ENCODE measurements at regions of chr1 and their contacts with region 1.

Region 1: DNA sequence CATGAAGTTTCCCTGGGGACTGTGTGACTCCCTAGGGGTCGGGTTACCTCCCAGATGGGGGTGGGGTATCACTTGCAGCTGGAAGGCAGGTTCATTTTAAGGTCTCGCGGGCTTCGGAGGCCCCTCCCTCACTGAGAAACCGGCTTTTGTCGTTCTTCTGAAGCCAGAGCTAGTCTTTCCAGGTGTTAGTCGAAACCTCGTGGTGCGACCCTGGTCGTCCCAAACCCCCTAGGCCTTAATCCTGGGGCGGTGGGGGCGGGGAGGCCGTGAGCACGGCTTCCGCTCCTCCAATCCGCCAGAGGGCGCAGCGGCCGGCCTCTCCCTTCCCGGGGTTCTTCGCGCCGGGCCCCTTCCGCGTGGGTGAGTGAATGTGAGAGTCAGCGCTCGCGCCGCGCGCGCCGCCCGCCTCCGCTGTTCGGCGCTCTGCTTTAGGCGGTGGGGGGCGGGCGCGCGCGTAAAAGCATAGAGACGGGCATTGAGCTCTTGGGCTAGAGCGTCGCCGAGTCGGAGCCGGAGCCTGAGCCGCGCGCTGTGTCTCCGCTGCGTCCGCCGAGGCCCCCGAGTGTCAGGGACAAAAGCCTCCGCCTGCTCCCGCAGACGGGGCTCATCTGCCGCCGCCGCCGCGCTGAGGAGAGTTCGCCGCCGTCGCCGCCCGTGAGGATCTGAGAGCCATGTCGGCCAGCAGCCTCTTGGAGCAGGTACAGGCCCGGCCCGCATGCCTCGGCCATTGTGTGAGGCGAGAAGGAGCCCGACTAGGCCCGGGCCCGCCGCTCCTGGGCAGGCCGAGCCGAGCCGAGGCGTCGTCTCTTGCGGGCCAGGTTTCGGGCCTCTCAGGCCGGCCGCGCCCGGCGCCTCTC is at the start of gene YTHDF2:
- DNase-seq: peak; percentile 99
- ATAC-seq: peak; percentile 91
- H3K4me3 Mint-ChIP-seq: peak within 1 kb of the TSS; percentile 98
- H3K27ac Mint-ChIP-seq: peak within 1 kb of the TSS; percentile 92
- H3K4me1 Mint-ChIP-seq: peaks cover 35% of the 10 kb centered on the region
- H3K27me3 Mint-ChIP-seq: no peaks in the 10 kb centered on the region
- CTCF ChIP-seq: peak; percentile 97
- total RNA-seq, gene YTHDF2: 72.2 to 82.1 TPM

Region 2: GRCh38 chr1:28642847-28643635 is 93.6 kb before region 1 on chr1 and contains the start of gene TAF12:
- CTCF ChIA-PET with region 1: interaction called, 21 read pairs
- POLR2A ChIA-PET with region 1: interaction called, 33 read pairs
- intact Hi-C with region 1: no loop called
- DNase-seq: peak; percentile 91
- ATAC-seq: peak; percentile 84
- H3K4me3 Mint-ChIP-seq: peak within 1 kb of the TSS; percentile 98
- H3K27ac Mint-ChIP-seq: peak within 1 kb of the TSS; percentile 97
- H3K4me1 Mint-ChIP-seq: peaks cover 44% of the 10 kb centered on the region
- H3K27me3 Mint-ChIP-seq: no peaks in the 10 kb centered on the region
- CTCF ChIP-seq: peak; percentile 42
- total RNA-seq, gene TAF12: 21.3 to 23.0 TPM

Region 3: DNA sequence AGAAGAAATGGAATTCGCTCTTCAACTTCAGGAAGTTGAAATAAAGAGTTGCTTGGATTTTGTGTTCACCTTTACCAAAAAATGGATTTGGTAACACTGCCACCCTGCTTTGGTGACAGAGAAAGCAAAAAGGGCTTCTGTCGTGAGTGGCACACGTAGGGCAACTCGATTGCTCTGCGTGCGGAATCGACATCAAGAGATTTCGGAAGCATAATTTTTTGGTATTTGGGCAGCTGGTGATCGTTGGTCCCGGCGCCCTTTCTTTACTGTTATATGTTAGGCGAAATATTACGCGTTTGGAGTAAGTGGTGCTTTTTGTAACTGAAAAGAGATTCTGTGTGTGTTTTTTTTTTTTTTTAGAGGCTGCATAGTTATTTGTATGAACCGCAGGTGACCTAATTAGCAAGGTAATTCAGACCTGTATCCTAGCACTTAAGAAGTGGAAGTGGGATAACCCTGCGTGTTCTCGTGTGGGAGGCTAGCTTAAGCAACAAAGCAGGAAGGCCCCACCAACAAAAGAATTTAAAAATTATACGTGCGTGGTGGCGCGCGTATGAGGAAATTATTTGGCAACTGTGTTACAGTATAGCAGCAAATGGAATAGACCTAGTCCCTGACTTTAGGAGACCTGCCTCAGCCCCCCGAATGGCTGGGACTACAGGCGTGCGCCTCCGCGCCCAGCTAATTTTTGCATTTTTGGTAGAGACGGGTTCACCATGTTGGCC is 88.0 kb before region 1 on chr1 and contains the start of gene RNU11:
- CTCF ChIA-PET with region 1: interaction called, 21 read pairs
- POLR2A ChIA-PET with region 1: interaction called, 33 read pairs
- intact Hi-C with region 1: no loop called
- DNase-seq: peak; percentile 93
- ATAC-seq: peak; percentile 80
- H3K4me3 Mint-ChIP-seq: peak within 1 kb of the TSS; percentile 91
- H3K27ac Mint-ChIP-seq: peak within 1 kb of the TSS; percentile 100
- H3K4me1 Mint-ChIP-seq: peaks cover 30% of the 10 kb centered on the region
- H3K27me3 Mint-ChIP-seq: no peaks in the 10 kb centered on the region
- CTCF ChIP-seq: no peak
- total RNA-seq, gene RNU11: not detected

Region 4: DNA sequence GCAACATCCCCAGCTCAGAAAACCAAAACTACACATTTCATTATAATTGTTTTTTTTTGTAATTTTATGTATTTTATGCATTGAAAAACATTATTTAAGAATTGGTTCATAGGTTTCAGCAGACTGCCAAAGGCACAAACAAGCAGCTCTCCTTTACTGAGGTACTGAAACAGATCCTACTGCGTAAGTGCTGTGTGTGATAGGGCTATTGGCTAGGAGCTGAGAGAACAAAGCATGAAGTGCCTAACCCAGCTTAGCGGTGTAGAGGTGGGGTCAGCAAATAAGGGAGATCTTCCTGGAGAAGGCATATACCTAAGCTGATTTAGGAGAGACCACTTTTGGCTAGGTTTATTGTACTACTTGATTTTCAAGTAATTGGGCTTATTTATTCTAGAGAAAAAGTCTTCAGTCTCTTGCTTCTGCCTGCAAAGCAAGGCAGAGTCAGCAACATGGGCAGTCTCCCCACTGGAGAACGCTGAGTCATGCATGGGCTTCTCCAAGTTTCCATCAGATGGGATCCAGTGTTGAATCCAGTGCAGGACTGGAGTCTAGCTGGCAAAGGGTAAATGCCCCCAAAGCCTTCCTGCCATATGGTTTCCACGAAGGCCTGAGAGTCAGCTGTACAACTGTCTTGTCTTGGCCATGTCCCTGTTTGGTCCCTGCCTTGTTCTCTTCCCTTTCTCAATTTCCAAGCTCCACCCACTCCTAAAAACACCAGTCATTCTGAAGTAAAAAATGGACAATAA is 17.9 kb before region 1 on chr1:
- CTCF ChIA-PET with region 1: interaction called, 26 read pairs
- POLR2A ChIA-PET with region 1: interaction called, 20 read pairs
- intact Hi-C with region 1: no loop called
- DNase-seq: no peak
- ATAC-seq: no peak
- H3K4me3 Mint-ChIP-seq: no peak overlapping the region
- H3K27ac Mint-ChIP-seq: peak overlapping the region; percentile 17
- H3K4me1 Mint-ChIP-seq: no peaks in the 10 kb centered on the region
- H3K27me3 Mint-ChIP-seq: no peaks in the 10 kb centered on the region
- CTCF ChIP-seq: no peak

Region 5: GRCh38 chr1:29426810-29427209 is 690.1 kb after region 1 on chr1:
- CTCF ChIA-PET with region 1: no interaction called
- POLR2A ChIA-PET with region 1: no interaction called
- intact Hi-C with region 1: no loop called
- DNase-seq: no peak
- ATAC-seq: no peak
- H3K4me3 Mint-ChIP-seq: no peak overlapping the region
- H3K27ac Mint-ChIP-seq: no peak overlapping the region
- H3K4me1 Mint-ChIP-seq: no peaks in the 10 kb centered on the region
- H3K27me3 Mint-ChIP-seq: peaks cover 13% of the 10 kb centered on the region
- CTCF ChIP-seq: no peak

Measured in activated CD8-positive, alpha-beta T cell treated with anti-CD3 and anti-CD28 coated beads for 36 hours (primary cell).